Posterior cingulate gyrus (tissue), 11 donors: ENCODE measurements at regions of chr10 and their contacts with region 1.

Region 1: GRCh38 chr10:118341791-118342637 is at the start of gene FAM204A:
- DNase-seq: peak; percentile 86 to 99 (median 92)

Region 2: GRCh38 chr10:118459726-118460193 is 117.7 kb after region 1 on chr10:
- intact Hi-C with region 1: loop called (anchors 10 kb)
- DNase-seq: peak; percentile 35 to 92 (median 67)

Region 3: DNA sequence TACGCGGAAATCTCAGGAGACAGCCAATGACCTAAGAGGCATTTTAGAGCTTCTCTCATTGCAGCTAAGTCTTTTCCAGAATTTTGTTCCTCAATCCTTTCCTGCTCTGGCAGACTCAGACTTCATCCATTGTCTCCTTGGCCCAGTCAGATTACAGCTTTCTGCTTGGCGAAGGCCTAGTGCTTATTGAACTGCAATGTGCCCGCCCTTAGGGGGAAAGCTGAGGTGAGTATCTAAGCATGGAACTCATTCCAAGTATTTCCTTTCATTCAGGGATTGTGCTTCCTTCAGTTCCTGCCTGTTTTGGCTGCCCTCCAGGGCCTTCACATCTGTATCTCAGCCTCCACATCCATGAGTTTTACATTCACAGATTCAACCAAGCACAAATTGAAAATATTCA is 215.9 kb after region 1 on chr10:
- intact Hi-C with region 1: no loop called
- DNase-seq: no peak

Region 4: DNA sequence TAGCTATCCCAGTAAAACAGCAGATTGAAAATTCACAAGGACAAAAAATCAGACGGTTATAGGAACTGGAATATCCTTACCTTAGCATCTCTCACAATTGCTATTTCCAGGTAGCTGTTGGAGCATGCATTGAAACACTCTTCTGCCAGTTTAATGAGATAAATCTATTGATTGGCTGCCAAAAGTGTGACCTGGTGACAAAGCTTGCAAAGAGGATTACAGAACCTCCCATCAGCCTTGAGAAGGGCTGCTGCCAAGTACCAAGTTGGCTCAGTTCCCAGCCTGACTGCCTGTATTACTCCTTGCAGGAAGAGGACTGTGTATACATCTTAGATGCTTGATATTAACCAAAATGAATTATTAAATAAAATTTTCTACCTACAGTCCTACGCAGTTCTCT is 248.3 kb after region 1 on chr10:
- intact Hi-C with region 1: no loop called
- DNase-seq: peak in 5 of 10 donors; percentile 32 to 88 (median 45)

Region 5: GRCh38 chr10:118607768-118608354 is 265.8 kb after region 1 on chr10:
- intact Hi-C with region 1: no loop called
- DNase-seq: no peak

Region 6: GRCh38 chr10:118674226-118674919 is 332.4 kb after region 1 on chr10:
- intact Hi-C with region 1: no loop called
- DNase-seq: no peak